Testis (tissue), 5 donors: ENCODE measurements at regions of chr2 and their contacts with region 1.

Region 1: GRCh38 chr2:150487537-150488429 is at the start of gene RND3:
- DNase-seq: peak; percentile 98
- H3K4me3 ChIP-seq: peak within 1 kb of the TSS; percentile 66 to 71
- H3K27ac ChIP-seq: peak within 1 kb of the TSS; percentile 53 to 66
- H3K4me1 ChIP-seq: peaks cover 4% of the 10 kb centered on the region
- H3K27me3 ChIP-seq: no peaks in the 10 kb centered on the region
- CTCF ChIP-seq: peak; percentile 78 to 85 (median 78)
- POLR2A ChIP-seq: peak; percentile 58
- total RNA-seq, gene RND3: 8.0 to 10.2 TPM

Region 2: GRCh38 chr2:149808556-149808955 is 679.2 kb before region 1 on chr2:
- intact Hi-C with region 1: loop called (anchors 10 kb)
- DNase-seq: no peak
- H3K4me3 ChIP-seq: no peak overlapping the region
- H3K27ac ChIP-seq: no peak overlapping the region
- H3K4me1 ChIP-seq: no peaks in the 10 kb centered on the region
- H3K27me3 ChIP-seq: no peaks in the 10 kb centered on the region
- CTCF ChIP-seq: no peak
- POLR2A ChIP-seq: no peak

Region 3: DNA sequence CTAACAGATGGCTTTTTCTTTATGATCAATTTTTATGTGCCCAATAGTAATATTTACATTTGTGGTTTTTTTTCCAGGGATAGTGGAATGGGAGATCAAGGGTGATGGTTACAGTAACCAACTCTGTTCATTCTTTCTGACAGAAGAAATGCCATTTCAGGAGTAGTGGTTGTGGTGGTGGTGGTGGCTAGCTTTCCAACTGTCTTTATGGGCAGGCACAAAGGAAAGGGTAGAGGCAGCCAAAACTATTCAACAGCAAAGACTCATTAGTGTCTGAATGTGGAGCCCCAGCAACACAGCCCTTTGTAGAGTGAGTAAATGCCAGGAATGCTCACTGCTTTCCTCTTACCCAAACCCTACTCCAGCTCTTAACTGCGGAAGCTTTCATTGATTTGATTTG is 228.0 kb before region 1 on chr2:
- intact Hi-C with region 1: no loop called
- DNase-seq: no peak
- H3K4me3 ChIP-seq: no peak overlapping the region
- H3K27ac ChIP-seq: no peak overlapping the region
- H3K4me1 ChIP-seq: peaks cover 7% of the 10 kb centered on the region
- H3K27me3 ChIP-seq: no peaks in the 10 kb centered on the region
- CTCF ChIP-seq: no peak
- POLR2A ChIP-seq: no peak